Naive thymus-derived CD4-positive, alpha-beta T cell (primary cell): ENCODE measurements at regions of chr19 and their contacts with region 1.

Region 1: GRCh38 chr19:16371540-16371986 is 46.9 kb downstream of the KLF2 start:
- DNase-seq: peak; percentile 73 to 97 (median 95)
- ATAC-seq: peak; percentile 72
- H3K4me3 ChIP-seq: peak overlapping the region; percentile 55
- H3K4me3 Mint-ChIP-seq: no peak overlapping the region
- H3K27ac ChIP-seq: peak overlapping the region; percentile 99
- H3K27ac Mint-ChIP-seq: no peak overlapping the region
- H3K4me1 ChIP-seq: peaks cover 89 to 94% of the 10 kb centered on the region in 2 donors
- H3K4me1 Mint-ChIP-seq: peaks cover 0 to 67% (median 53%) of the 10 kb centered on the region in 7 donors
- H3K27me3 ChIP-seq: no peaks in the 10 kb centered on the region
- H3K27me3 Mint-ChIP-seq: peaks cover 0 to 15% (median 0%) of the 10 kb centered on the region in 5 donors

Region 2: DNA sequence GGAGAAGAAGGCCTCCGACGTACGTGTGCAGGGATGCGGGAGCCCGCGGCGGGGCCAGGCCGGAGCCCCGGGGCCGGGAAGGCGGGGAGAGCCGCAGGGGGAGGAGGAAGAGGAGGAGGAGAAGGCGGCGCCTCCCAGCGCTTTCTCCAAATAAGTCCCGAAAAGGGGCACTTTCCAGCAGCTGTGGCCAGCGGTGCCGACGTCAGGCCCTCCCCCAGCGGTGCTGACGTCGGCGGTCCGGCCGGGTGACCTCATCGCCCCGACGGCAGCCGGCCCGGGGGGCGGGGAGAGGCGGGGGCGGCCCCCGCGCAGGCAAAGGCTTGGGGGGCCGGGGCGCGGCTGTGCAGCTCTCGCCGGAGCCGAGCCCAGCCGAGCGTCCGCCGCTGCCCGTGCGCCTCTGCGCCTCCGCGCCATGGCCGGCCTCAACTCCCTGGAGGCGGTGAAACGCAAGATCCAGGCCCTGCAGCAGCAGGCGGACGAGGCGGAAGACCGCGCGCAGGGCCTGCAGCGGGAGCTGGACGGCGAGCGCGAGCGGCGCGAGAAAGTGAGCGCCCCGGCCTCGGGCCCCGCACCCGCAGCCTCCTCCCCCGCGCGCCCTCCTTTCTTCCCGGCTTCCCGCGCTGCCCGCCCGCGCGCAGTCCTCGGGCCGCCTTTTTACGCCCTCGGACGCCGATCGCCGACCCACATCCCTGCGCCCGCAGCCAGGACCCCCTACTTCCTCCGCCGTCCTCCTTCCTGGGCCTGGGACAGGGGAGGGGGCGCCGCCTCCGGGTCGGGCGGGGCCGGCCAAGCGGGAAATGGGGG is 295.2 kb before region 1 on chr19 and contains the start of gene TPM4:
- CTCF ChIA-PET with region 1: no interaction called
- POLR2A ChIA-PET with region 1: interaction called, 5 read pairs
- intact Hi-C with region 1: loop called (anchors 2 to 5 kb)
- DNase-seq: peak; percentile 43 to 89 (median 50)
- ATAC-seq: peak; percentile 68
- H3K4me3 ChIP-seq: peak within 1 kb of the TSS; percentile 82
- H3K4me3 Mint-ChIP-seq: peak within 1 kb of the TSS; percentile 84 to 97 (median 90)
- H3K27ac ChIP-seq: peak within 1 kb of the TSS; percentile 89
- H3K27ac Mint-ChIP-seq: peak within 1 kb of the TSS; percentile 90 to 99 (median 97)
- H3K4me1 ChIP-seq: peaks cover 29 to 72% of the 10 kb centered on the region in 2 donors
- H3K4me1 Mint-ChIP-seq: peaks cover 54 to 80% (median 65%) of the 10 kb centered on the region in 7 donors
- H3K27me3 ChIP-seq: no peaks in the 10 kb centered on the region
- H3K27me3 Mint-ChIP-seq: no peaks in the 10 kb centered on the region
- total RNA-seq, gene TPM4: 65.8 to 435 (median 126) TPM

Region 3: GRCh38 chr19:16141043-16141442 is 230.5 kb before region 1 on chr19:
- CTCF ChIA-PET with region 1: no interaction called
- POLR2A ChIA-PET with region 1: no interaction called
- intact Hi-C with region 1: no loop called
- DNase-seq: no peak
- ATAC-seq: peak; percentile 24
- H3K4me3 ChIP-seq: no peak overlapping the region
- H3K4me3 Mint-ChIP-seq: peak overlapping the region in 3 of 10 donors; percentile 21 to 56 (median 30)
- H3K27ac ChIP-seq: no peak overlapping the region
- H3K27ac Mint-ChIP-seq: peak overlapping the region in 3 of 9 donors; percentile 46 to 80 (median 57)
- H3K4me1 ChIP-seq: peaks cover 12 to 30% of the 10 kb centered on the region in 2 donors
- H3K4me1 Mint-ChIP-seq: peaks cover 19 to 51% (median 26%) of the 10 kb centered on the region in 7 donors
- H3K27me3 ChIP-seq: no peaks in the 10 kb centered on the region
- H3K27me3 Mint-ChIP-seq: no peaks in the 10 kb centered on the region

Region 4: GRCh38 chr19:16216744-16217670 is 154.6 kb before region 1 on chr19:
- CTCF ChIA-PET with region 1: no interaction called
- POLR2A ChIA-PET with region 1: interaction called, 35 read pairs
- intact Hi-C with region 1: no loop called
- DNase-seq: peak in 7 of 9 donors; percentile 36 to 55 (median 50)
- ATAC-seq: peak; percentile 76
- H3K4me3 ChIP-seq: peak overlapping the region; percentile 34
- H3K4me3 Mint-ChIP-seq: peak overlapping the region; percentile 33 to 85 (median 78)
- H3K27ac ChIP-seq: peak overlapping the region; percentile 57
- H3K27ac Mint-ChIP-seq: peak overlapping the region; percentile 52 to 97 (median 92)
- H3K4me1 ChIP-seq: peaks cover 0 to 44% of the 10 kb centered on the region in 2 donors
- H3K4me1 Mint-ChIP-seq: peaks cover 29 to 68% (median 56%) of the 10 kb centered on the region in 7 donors
- H3K27me3 ChIP-seq: no peaks in the 10 kb centered on the region
- H3K27me3 Mint-ChIP-seq: no peaks in the 10 kb centered on the region

Region 5: GRCh38 chr19:16290692-16291091 is 80.9 kb before region 1 on chr19:
- CTCF ChIA-PET with region 1: no interaction called
- POLR2A ChIA-PET with region 1: interaction called, 10 read pairs
- intact Hi-C with region 1: no loop called
- DNase-seq: no peak
- ATAC-seq: no peak
- H3K4me3 ChIP-seq: no peak overlapping the region
- H3K4me3 Mint-ChIP-seq: no peak overlapping the region
- H3K27ac ChIP-seq: no peak overlapping the region
- H3K27ac Mint-ChIP-seq: no peak overlapping the region
- H3K4me1 ChIP-seq: peaks cover 0 to 13% of the 10 kb centered on the region in 2 donors
- H3K4me1 Mint-ChIP-seq: peaks cover 9 to 25% (median 18%) of the 10 kb centered on the region in 7 donors
- H3K27me3 ChIP-seq: no peaks in the 10 kb centered on the region
- H3K27me3 Mint-ChIP-seq: peaks cover 0 to 40% (median 0%) of the 10 kb centered on the region in 5 donors

Region 6: GRCh38 chr19:16330368-16330801 is 41.2 kb before region 1 on chr19:
- CTCF ChIA-PET with region 1: interaction called, 159 read pairs
- POLR2A ChIA-PET with region 1: interaction called, 4,370 read pairs
- intact Hi-C with region 1: loop called (anchors 1 kb)
- DNase-seq: peak; percentile 76 to 96 (median 92)
- ATAC-seq: peak; percentile 74
- H3K4me3 ChIP-seq: no peak overlapping the region
- H3K4me3 Mint-ChIP-seq: peak overlapping the region; percentile 89 to 99 (median 97)
- H3K27ac ChIP-seq: peak overlapping the region; percentile 98
- H3K27ac Mint-ChIP-seq: peak overlapping the region; percentile 95 to 100 (median 98)
- H3K4me1 ChIP-seq: peaks cover 21 to 37% of the 10 kb centered on the region in 2 donors
- H3K4me1 Mint-ChIP-seq: peaks cover 17 to 62% (median 44%) of the 10 kb centered on the region in 7 donors
- H3K27me3 ChIP-seq: no peaks in the 10 kb centered on the region
- H3K27me3 Mint-ChIP-seq: peaks cover 0 to 36% (median 0%) of the 10 kb centered on the region in 5 donors

Region 7: DNA sequence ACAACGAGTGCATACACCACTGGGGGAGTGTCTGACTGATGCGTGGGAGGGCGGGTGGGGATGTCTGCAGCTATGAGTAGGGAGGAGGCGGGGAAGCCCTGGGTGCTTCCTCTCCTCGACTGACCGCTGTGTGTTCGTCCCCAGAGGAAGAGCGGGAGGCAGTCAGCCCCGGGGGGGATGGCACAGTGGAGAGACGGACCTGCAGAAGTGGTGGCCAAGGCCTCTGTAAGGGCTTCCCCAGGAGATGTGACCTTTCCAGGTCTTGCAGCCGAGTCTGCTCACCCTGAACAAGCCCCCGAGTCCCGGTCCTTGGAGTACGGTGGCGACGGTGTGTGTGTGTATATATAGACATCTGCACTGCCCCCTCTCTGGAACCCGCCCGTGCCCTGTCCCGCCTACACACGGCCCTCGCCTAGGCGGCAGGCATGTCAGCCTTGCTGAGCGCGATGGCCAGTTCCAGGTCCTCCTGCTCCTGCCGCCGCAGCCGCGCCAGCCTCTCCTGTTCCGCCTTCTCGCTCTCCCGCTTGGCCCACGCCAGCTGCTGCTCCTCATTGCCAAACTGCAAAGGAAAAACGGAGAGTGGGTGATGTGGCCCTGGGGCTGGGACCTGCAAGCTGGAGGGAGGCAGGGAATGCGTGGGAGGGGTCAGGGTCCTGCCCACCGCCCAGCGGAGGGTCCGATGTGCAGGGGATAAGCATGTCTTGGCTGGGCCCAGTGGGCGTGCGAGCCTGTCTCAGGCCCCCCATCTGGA is 16.1 kb before region 1 on chr19:
- CTCF ChIA-PET with region 1: interaction called, 6 read pairs
- POLR2A ChIA-PET with region 1: interaction called, 1,067 read pairs
- intact Hi-C with region 1: loop called in 1 of 2 experiments (anchors 1 kb)
- DNase-seq: peak in 1 of 9 donors; percentile 28
- ATAC-seq: peak; percentile 78
- H3K4me3 ChIP-seq: no peak overlapping the region
- H3K4me3 Mint-ChIP-seq: peak overlapping the region; percentile 48 to 82 (median 70)
- H3K27ac ChIP-seq: peak overlapping the region; percentile 47
- H3K27ac Mint-ChIP-seq: peak overlapping the region in 8 of 9 donors; percentile 49 to 92 (median 80)
- H3K4me1 ChIP-seq: peaks cover 25 to 74% of the 10 kb centered on the region in 2 donors
- H3K4me1 Mint-ChIP-seq: peaks cover 64 to 91% (median 77%) of the 10 kb centered on the region in 7 donors
- H3K27me3 ChIP-seq: no peaks in the 10 kb centered on the region
- H3K27me3 Mint-ChIP-seq: peaks cover 0 to 8% (median 0%) of the 10 kb centered on the region in 5 donors

Region 8: GRCh38 chr19:16382775-16383543 is 11.4 kb after region 1 on chr19:
- CTCF ChIA-PET with region 1: interaction called, 140 read pairs
- POLR2A ChIA-PET with region 1: interaction called, 1,067 read pairs
- intact Hi-C with region 1: loop called (anchors 1 kb)
- DNase-seq: peak; percentile 63 to 81 (median 75)
- ATAC-seq: peak; percentile 82
- H3K4me3 ChIP-seq: peak overlapping the region; percentile 44
- H3K4me3 Mint-ChIP-seq: peak overlapping the region; percentile 61 to 84 (median 70)
- H3K27ac ChIP-seq: peak overlapping the region; percentile 84
- H3K27ac Mint-ChIP-seq: peak overlapping the region in 7 of 9 donors; percentile 87 to 98 (median 97)
- H3K4me1 ChIP-seq: peaks cover 37 to 53% of the 10 kb centered on the region in 2 donors
- H3K4me1 Mint-ChIP-seq: peaks cover 36 to 81% (median 63%) of the 10 kb centered on the region in 7 donors
- H3K27me3 ChIP-seq: no peaks in the 10 kb centered on the region
- H3K27me3 Mint-ChIP-seq: no peaks in the 10 kb centered on the region